H1 (cell line): ENCODE measurements at regions of chr16 and their contacts with region 1.

Region 1: GRCh38 chr16:89190150-89190958 is 10.0 kb downstream of the SLC22A31 start:
- DNase-seq: peak in 1 of 2 experiments; percentile 48
- H3K4me3 ChIP-seq: no peak overlapping the region
- H3K27ac ChIP-seq: no peak overlapping the region
- H3K4me1 ChIP-seq: no peaks in the 10 kb centered on the region; a peak in 1 of 7 replicates
- H3K27me3 ChIP-seq: peaks cover 0 to 9% (median 6%) of the 10 kb centered on the region in 4 experiments; a peak in 6 of 7 replicates
- CTCF ChIP-seq: no peak
- EP300 ChIP-seq: no peak
- POLR2A ChIP-seq: no peak
- RAD21 ChIP-seq: no peak

Region 2: DNA sequence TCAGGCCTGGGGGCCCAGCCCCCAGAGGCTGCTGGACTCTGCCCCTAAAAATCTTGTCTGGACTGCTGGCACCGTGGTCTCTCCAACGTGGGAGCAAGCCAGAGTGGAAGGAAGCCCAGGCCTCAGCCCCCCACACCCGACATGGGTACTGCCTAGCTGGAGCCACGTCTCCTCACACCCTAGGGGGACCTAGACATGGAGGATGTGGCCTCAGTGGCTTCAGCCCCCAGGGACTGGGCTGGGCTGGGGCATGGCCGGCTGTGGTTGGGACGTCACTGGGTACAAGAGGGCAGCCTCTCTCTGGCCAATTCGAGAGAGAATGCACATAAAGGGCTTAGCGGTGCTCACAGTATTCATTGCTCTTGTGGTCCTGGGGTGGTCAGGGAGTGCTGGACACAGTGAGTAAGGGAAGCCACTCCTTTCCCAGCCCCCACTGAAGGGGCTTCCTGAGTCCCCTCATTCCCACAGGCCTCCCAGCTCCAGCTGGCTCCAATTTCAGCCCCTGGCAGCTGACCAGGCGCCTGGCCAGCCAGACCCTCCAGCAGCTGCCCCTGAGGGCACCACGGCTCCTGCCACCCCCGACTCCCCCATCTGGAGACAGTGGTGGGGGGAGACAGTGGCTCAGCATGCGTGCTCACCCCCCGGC is 17.7 kb before region 1 on chr16:
- CTCF ChIA-PET with region 1: interaction called, 10 read pairs
- POLR2A ChIA-PET with region 1: interaction called, 9 read pairs
- DNase-seq: no peak
- H3K4me3 ChIP-seq: no peak overlapping the region
- H3K27ac ChIP-seq: no peak overlapping the region
- H3K4me1 ChIP-seq: peaks cover 0 to 26% (median 17%) of the 10 kb centered on the region in 4 experiments; a peak in 6 of 7 replicates
- H3K27me3 ChIP-seq: peaks cover 0 to 7% (median 4%) of the 10 kb centered on the region in 4 experiments; a peak in 4 of 7 replicates
- CTCF ChIP-seq: no peak
- EP300 ChIP-seq: no peak
- POLR2A ChIP-seq: no peak
- RAD21 ChIP-seq: no peak